Activated CD4-positive, alpha-beta memory T cell treated with anti-CD3 and anti-CD28 coated beads for 36 hours (primary cell): ENCODE measurements at regions of chr1 and their contacts with region 1.

Region 1: DNA sequence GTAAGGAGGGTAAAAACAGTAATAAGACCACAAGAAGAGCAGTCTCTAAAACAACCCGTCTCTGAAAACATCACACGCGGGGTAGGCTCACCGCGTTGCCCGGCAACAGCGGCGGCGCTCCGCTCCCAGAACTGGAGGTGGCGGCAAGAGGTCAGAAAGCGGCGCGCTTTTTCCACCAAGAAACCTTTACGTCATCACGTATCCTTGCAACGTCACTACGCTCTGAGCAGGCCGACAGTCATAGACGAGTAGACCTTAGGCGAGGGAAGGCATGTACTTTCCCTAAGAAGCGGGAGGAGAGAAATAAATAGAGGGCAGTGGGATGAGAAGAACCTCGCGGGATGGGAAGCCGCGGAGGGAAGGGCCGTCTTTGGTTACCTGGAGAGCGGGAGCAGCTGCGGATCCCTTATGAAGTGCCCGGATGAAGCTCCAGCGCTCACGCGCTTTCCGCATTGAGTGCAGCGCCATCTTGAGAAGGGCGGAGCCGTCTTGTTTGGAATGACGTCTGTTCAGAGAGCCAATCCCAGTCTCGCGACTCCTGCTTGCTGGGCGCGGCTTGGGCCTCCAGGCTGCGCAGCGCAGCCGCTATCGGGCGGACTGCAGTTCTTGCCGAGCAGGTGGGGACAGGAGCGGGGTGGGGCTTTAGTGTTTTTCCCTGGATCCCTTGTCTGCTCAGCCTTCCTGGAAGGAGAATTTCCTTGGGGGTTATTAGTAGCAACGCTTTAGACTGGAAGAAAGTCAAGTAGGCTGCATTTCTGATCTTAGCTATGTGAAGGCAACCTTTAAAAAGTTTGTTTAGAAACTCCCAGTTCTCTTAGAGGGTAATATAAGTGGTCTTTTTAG is at the start of gene WARS2:
- DNase-seq: peak; percentile 95
- H3K4me3 Mint-ChIP-seq: no peak within 1 kb of the TSS
- H3K27ac Mint-ChIP-seq: no peak within 1 kb of the TSS
- H3K4me1 Mint-ChIP-seq: peaks cover 27% of the 10 kb centered on the region
- H3K27me3 Mint-ChIP-seq: no peaks in the 10 kb centered on the region
- total RNA-seq, gene WARS2: 16.7 to 18.2 TPM

Region 2: DNA sequence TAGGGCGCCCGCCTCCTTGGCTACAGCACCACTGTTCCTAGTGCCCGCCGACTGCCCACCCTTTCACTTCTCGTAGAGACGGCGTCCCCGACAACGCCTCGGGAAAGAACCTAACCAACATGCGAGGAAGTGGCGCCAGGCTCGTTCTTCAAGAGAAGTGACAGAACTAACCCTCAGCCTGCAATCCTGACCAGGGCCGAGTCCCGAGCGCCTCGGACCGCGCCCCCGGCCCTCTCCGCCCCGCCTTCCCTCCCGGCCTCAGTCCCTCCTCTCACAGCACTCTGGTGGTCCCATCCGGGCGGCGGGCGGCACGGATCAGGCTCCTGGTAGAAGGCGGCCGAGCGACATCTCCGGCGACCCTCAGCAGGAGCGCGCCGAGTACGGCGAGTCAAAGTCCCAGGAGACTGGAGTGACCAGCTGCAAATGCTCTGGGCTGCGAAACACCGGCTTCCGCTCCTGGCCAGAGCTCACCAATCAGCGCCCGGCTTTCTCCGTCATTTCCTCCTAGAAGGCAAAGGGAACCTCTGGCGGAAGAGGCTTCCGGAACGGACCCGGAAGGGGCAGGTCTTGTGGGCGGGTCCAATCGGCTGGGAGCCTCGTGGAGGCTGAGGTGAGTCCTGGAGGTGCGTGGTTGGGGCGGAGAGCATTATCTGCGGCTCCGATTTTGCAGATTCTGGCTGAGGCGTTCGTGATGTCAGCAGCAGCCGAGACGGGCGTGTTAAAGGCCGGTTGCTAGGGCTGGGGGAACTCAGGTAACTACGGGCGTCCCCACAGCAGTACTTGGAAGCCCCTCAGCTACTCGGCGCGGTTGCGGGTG is 1211.0 kb before region 1 on chr1 and contains the starts of genes GDAP2 and WDR3:
- CTCF ChIA-PET with region 1: no interaction called
- POLR2A ChIA-PET with region 1: no interaction called
- intact Hi-C with region 1: loop called (anchors 1 kb)
- DNase-seq: peak; percentile 98
- H3K4me3 Mint-ChIP-seq: peak within 1 kb of the TSS; percentile 96
- H3K27ac Mint-ChIP-seq: peak within 1 kb of the TSS; percentile 86
- H3K4me1 Mint-ChIP-seq: peaks cover 48% of the 10 kb centered on the region
- H3K27me3 Mint-ChIP-seq: no peaks in the 10 kb centered on the region
- total RNA-seq, gene GDAP2: 19.1 to 20.8 TPM
- total RNA-seq, gene WDR3: 48.3 to 51.8 TPM

Region 3: DNA sequence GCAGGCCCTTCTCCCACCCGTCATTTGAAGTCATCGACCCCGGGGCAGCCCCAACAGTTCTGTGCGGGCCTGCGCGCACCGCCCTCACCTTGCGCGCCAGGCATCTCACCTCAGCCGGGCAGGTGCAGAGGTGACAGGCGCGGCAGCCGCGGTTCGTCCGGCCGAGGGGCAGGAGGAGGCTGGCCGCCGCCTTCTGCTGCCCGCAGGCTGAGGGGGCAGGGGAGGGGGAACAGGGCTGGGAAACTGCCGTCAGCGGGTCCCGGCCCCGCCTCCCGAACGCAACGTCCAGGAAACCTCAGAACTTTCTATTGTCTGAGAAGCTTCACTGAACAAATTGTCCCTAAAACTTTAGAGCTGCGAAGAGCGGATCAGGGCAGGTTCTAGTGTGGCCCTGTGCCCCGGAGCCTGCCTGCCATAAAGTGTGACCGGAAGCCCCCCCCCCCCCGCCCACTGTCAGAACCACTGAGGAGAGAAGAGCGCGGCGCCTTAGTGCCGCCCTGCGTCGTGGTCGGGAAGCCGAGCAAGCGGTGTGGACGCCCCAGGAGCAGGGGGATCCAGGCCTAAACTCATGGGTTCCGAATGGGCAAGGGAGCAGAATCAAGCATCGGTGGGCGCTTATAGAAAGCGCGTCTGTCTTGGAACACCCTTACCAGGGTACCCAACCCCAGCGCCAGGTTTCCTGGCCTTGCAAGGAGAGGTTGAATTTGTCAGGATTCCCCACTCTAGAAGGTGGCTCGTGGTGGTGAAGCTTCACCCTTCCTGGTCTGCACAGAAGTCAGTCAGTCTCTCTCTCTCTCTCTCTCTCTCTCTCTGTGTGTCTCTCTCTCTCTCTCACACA is 139.0 kb before region 1 on chr1:
- CTCF ChIA-PET with region 1: no interaction called
- POLR2A ChIA-PET with region 1: no interaction called
- intact Hi-C with region 1: no loop called
- DNase-seq: no peak
- H3K4me3 Mint-ChIP-seq: no peak overlapping the region
- H3K27ac Mint-ChIP-seq: no peak overlapping the region
- H3K4me1 Mint-ChIP-seq: peaks cover 8% of the 10 kb centered on the region
- H3K27me3 Mint-ChIP-seq: peaks cover 78% of the 10 kb centered on the region

Region 4: GRCh38 chr1:119298687-119299303 is 158.4 kb after region 1 on chr1:
- CTCF ChIA-PET with region 1: no interaction called
- POLR2A ChIA-PET with region 1: no interaction called
- intact Hi-C with region 1: no loop called
- DNase-seq: no peak
- H3K4me3 Mint-ChIP-seq: no peak overlapping the region
- H3K27ac Mint-ChIP-seq: no peak overlapping the region
- H3K4me1 Mint-ChIP-seq: peaks cover 16% of the 10 kb centered on the region
- H3K27me3 Mint-ChIP-seq: peaks cover 18% of the 10 kb centered on the region

Region 5: DNA sequence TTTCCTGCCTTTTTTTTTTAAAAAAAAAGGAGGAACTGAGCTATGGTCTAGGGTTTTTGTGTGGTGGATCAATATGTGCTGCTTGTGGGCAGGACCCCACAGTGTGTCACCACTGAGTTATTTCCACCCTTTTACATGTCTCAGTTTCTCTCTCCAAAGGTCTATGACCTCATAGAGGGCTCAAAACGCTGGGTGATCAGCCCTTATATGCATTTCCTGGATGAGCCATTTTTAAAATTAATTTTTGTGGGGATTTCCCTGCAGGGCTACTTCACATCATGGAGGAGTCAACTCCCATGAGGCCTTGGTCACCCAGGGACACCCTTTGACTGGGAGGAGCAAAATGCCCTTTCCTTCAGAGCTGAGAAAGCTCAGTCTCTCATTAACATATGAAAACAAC is 207.5 kb after region 1 on chr1:
- CTCF ChIA-PET with region 1: no interaction called
- POLR2A ChIA-PET with region 1: no interaction called
- intact Hi-C with region 1: loop called (anchors 5 kb)
- DNase-seq: peak; percentile 45
- H3K4me3 Mint-ChIP-seq: no peak overlapping the region
- H3K27ac Mint-ChIP-seq: no peak overlapping the region
- H3K4me1 Mint-ChIP-seq: peaks cover 3% of the 10 kb centered on the region
- H3K27me3 Mint-ChIP-seq: peaks cover 3% of the 10 kb centered on the region